ENCODE measurements at regions of chr1 and their contacts with region 1.

Region 1: DNA sequence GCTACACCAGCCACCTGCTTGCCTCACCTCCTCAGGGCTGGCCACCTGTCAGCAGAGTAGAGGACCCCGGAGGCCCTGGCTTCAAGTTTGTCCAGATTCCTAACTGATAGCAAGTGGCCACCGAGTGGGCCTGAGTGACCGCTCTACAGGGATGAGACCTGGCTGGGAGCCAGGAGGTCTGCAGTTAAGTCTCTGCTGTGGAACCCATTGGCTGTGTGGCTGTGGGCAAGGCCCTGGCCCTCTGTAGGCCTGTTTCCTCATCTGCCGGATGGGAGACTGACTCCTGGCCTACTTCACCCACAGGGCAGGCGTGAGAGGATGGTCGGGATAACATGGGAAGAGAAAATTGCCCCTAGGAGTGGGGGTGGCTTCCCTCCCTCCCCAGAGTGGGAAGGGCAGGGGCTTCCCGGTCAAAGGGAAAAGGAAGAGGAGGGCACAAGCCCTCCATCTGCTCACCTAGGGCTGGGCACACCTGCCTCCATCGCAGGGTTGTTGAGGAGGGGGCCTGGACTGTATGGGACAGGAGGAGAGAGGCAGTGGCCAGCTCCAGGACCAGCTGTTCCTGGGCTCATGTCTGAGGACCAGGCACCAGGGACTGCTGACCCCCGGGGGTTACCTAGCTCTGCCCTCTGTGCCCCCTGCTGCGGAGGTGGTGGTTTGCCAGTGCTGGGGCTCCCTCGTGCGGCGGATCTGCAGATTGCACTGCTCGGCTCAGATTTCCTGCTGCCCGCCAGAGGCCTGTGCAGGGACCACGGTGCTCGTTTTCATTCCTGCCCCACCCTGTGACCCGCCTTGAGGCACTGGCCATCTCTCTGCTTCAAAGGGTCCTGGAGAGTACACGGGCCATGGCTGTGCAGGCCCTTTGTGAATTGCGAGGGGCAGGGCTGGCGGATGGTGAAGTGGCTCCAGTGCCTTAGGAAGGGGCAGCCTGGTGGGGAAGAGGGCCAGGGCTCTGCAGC is 9.1 kb upstream of the MTFR1L start:
- DNase-seq: peak; percentile 70 to 89 (median 80)
- ATAC-seq: peak; percentile 99
- H3K4me3 ChIP-seq: no peak overlapping the region
- H3K4me3 Mint-ChIP-seq: no peak overlapping the region
- H3K27ac ChIP-seq: no peak overlapping the region
- H3K27ac Mint-ChIP-seq: no peak overlapping the region
- H3K4me1 ChIP-seq: peaks cover 13% of the 10 kb centered on the region
- H3K4me1 Mint-ChIP-seq: peaks cover 5% of the 10 kb centered on the region
- H3K27me3 ChIP-seq: no peaks in the 10 kb centered on the region
- H3K27me3 Mint-ChIP-seq: no peaks in the 10 kb centered on the region
- CTCF ChIP-seq: peak; percentile 96

Region 2: GRCh38 chr1:25503551-25504426 is 306.8 kb before region 1 on chr1:
- CTCF ChIA-PET with region 1: interaction called, 4 read pairs
- POLR2A ChIA-PET with region 1: interaction called, 4 read pairs
- intact Hi-C with region 1: loop called in 1 of 2 experiments (anchors 1 kb)
- DNase-seq: peak; percentile 66 to 84 (median 76)
- ATAC-seq: peak; percentile 96
- H3K4me3 ChIP-seq: no peak overlapping the region
- H3K4me3 Mint-ChIP-seq: no peak overlapping the region
- H3K27ac ChIP-seq: no peak overlapping the region
- H3K27ac Mint-ChIP-seq: peak overlapping the region; percentile 84
- H3K4me1 ChIP-seq: peaks cover 27% of the 10 kb centered on the region
- H3K4me1 Mint-ChIP-seq: peaks cover 34% of the 10 kb centered on the region
- H3K27me3 ChIP-seq: no peaks in the 10 kb centered on the region
- H3K27me3 Mint-ChIP-seq: no peaks in the 10 kb centered on the region
- CTCF ChIP-seq: peak; percentile 86

Region 3: GRCh38 chr1:25520446-25521061 is 290.1 kb before region 1 on chr1:
- CTCF ChIA-PET with region 1: interaction called, 3 read pairs
- POLR2A ChIA-PET with region 1: no interaction called
- intact Hi-C with region 1: loop called in 1 of 2 experiments (anchors 5 kb)
- DNase-seq: peak; percentile 58 to 89 (median 72)
- ATAC-seq: peak; percentile 72
- H3K4me3 ChIP-seq: no peak overlapping the region
- H3K4me3 Mint-ChIP-seq: no peak overlapping the region
- H3K27ac ChIP-seq: no peak overlapping the region
- H3K27ac Mint-ChIP-seq: peak overlapping the region; percentile 47
- H3K4me1 ChIP-seq: peaks cover 8% of the 10 kb centered on the region
- H3K4me1 Mint-ChIP-seq: peaks cover 10% of the 10 kb centered on the region
- H3K27me3 ChIP-seq: no peaks in the 10 kb centered on the region
- H3K27me3 Mint-ChIP-seq: no peaks in the 10 kb centered on the region
- CTCF ChIP-seq: peak; percentile 84

Region 4: GRCh38 chr1:25608488-25609178 is 202.0 kb before region 1 on chr1:
- CTCF ChIA-PET with region 1: interaction called, 11 read pairs
- POLR2A ChIA-PET with region 1: interaction called, 8 read pairs
- intact Hi-C with region 1: loop called in 1 of 2 experiments (anchors 1 kb)
- DNase-seq: peak; percentile 78 to 95 (median 86)
- ATAC-seq: peak; percentile 99
- H3K4me3 ChIP-seq: peak overlapping the region; percentile 6
- H3K4me3 Mint-ChIP-seq: peak overlapping the region; percentile 45
- H3K27ac ChIP-seq: no peak overlapping the region
- H3K27ac Mint-ChIP-seq: no peak overlapping the region
- H3K4me1 ChIP-seq: peaks cover 17% of the 10 kb centered on the region
- H3K4me1 Mint-ChIP-seq: peaks cover 25% of the 10 kb centered on the region
- H3K27me3 ChIP-seq: no peaks in the 10 kb centered on the region
- H3K27me3 Mint-ChIP-seq: no peaks in the 10 kb centered on the region
- CTCF ChIP-seq: peak; percentile 71

Region 5: DNA sequence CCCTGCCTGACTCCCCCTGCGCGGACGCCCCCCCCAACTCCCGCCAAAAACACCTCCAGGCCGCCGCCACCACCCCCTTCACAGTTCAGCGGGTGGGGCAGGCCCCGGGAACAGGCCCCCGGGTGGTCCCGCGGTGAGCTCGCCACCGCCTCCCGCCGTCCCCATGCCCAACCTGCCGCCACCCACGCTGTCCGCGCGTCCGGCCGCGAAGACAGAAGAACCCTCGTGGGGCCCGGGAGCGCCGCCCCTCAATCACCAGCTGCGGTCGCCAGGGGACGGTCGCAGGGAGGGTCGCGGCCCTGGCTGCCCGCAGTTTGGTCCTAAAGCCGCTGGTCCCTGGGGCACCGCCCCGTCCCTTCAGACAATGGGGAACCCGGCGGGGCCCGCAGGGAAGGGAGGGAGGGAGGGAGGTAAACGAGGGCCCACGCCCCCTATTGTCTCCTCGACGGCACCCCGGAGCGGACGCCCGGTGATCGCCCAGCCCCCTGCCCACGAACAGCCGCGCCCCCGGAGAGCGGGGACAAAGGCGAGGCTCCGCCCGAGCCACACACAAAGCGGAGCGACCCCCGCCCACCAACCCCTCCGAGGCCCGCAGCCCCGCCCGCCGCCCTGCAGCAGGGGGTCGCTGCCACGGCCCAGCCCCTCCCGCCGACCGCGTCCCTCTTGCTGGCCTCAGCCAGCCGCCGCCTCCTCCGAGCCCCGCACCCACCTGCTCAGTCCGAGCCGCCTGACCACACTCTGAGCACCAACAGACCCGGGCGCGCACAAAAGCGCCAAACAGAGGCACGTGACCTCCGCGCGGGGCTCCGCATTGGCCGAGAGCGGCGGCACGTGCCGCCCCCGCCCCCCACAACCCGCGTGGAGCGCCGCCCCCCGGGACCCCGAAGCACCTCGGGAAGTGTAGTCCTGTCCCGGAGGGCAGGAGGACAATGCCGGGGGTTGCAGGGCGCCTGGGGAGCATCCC is 95.3 kb after region 1 on chr1 and contains the start of gene STMN1:
- CTCF ChIA-PET with region 1: no interaction called
- POLR2A ChIA-PET with region 1: no interaction called
- intact Hi-C with region 1: no loop called
- DNase-seq: peak; percentile 81 to 94 (median 88)
- ATAC-seq: peak; percentile 75
- H3K4me3 ChIP-seq: peak within 1 kb of the TSS; percentile 72
- H3K4me3 Mint-ChIP-seq: peak within 1 kb of the TSS; percentile 98
- H3K27ac ChIP-seq: peak within 1 kb of the TSS; percentile 64 to 65
- H3K27ac Mint-ChIP-seq: peak within 1 kb of the TSS; percentile 97
- H3K4me1 ChIP-seq: peaks cover 22% of the 10 kb centered on the region
- H3K4me1 Mint-ChIP-seq: peaks cover 23% of the 10 kb centered on the region
- H3K27me3 ChIP-seq: no peaks in the 10 kb centered on the region
- H3K27me3 Mint-ChIP-seq: no peaks in the 10 kb centered on the region
- CTCF ChIP-seq: no peak
- total RNA-seq, gene STMN1: 25.2 to 25.6 TPM